Activated naive CD4-positive, alpha-beta T cell treated with anti-CD3 and anti-CD28 coated beads for 36 hours (primary cell): ENCODE measurements at regions of chr19 and their contacts with region 1.

Region 1: DNA sequence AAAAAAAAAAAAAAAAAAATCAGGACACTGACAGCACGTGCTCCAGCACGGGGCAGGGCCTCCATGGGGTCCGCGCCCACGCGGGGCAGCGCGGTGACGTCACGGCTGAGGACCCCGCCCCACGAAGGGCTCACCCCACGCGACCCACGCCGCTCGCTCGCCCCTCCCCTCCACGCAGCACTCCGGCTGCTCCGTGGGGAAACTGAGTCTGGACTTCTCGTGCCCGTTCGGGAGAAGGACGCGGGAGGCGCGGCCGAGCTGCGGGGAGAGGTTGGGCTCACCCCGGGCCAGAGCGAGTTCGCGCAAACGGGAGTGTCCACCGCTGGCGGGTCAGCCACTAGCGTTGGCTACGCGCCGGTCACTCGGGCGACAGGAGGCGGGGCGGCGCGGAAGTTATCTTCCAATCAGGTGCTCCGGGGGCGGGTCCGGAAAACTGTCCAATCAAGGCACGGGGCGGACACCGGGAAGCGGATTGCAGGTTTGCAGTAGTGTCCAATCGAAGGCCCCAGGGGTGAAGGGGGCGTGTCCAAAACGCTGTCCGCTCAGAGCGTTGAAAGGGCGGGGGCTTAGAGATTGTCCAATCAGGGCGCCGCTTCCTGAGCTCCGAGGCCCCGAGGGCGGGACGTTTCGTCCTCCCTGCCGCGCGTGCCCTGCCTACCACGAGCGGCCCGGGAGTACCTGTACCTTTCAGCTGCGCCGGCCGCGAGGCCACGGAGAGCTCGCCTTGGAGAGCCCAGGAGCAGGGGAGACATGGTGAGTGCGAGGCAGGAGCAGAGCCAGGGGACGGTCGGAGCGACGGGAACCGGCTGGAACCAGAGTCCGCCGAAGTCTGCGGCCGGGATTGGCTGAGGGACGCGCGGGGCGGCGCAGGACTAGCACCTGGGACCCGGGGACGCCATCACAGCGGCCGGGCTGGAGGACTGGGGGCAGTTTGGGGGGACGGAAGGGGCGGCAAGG is at the start of gene ZNF57:
- DNase-seq: peak; percentile 99
- H3K4me3 Mint-ChIP-seq: peak within 1 kb of the TSS; percentile 100
- H3K27ac Mint-ChIP-seq: peak within 1 kb of the TSS; percentile 82
- H3K4me1 Mint-ChIP-seq: peaks cover 15% of the 10 kb centered on the region
- H3K27me3 Mint-ChIP-seq: no peaks in the 10 kb centered on the region
- total RNA-seq, gene ZNF57: 3.9 to 4.7 TPM

Region 2: DNA sequence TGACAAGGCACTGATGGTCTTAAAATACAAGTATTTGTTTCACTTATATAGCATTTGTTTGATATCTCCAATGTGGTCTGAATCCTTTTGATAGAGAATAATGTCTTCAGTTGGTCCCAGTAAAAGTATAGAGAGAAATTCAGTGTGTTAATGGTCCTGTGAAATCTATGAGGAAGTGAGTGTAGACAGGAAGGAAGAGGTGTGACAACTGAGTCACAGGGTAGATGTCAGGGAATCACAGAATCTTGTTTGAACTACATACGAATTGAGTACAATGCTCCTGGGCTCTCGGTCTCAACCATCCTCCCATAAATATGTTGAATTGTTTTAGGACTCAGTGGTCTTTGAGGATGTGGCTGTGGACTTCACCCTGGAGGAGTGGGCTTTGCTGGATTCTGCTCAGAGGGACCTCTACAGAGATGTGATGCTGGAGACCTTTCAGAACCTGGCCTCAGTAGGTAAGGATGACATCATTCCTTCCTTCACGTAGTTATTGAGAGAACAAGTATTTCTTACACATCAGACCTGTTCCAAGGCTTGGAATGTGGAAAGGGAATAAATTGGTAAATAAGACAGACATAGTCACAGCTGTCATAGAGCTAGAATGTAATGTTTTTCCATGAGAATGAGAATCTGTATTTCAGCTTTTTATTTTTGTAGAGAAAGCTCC is 50.2 kb before region 1 on chr19:
- CTCF ChIA-PET with region 1: no interaction called
- intact Hi-C with region 1: loop called (anchors 5 kb)
- DNase-seq: no peak
- H3K4me3 Mint-ChIP-seq: no peak overlapping the region
- H3K27ac Mint-ChIP-seq: peak overlapping the region; percentile 43
- H3K4me1 Mint-ChIP-seq: peaks cover 13% of the 10 kb centered on the region
- H3K27me3 Mint-ChIP-seq: no peaks in the 10 kb centered on the region

Region 3: GRCh38 chr19:2944775-2945574 is 44.4 kb after region 1 on chr19 and contains the start of gene ZNF77:
- CTCF ChIA-PET with region 1: no interaction called
- intact Hi-C with region 1: loop called (anchors 1 kb)
- DNase-seq: peak; percentile 100
- H3K4me3 Mint-ChIP-seq: peak within 1 kb of the TSS; percentile 98
- H3K27ac Mint-ChIP-seq: peak within 1 kb of the TSS; percentile 95
- H3K4me1 Mint-ChIP-seq: peaks cover 34% of the 10 kb centered on the region
- H3K27me3 Mint-ChIP-seq: no peaks in the 10 kb centered on the region
- total RNA-seq, gene ZNF77: 3.7 to 3.9 TPM

Region 4: GRCh38 chr19:3082331-3082730 is 181.8 kb after region 1 on chr19:
- CTCF ChIA-PET with region 1: no interaction called
- intact Hi-C with region 1: no loop called
- DNase-seq: no peak
- H3K4me3 Mint-ChIP-seq: no peak overlapping the region
- H3K27ac Mint-ChIP-seq: no peak overlapping the region
- H3K4me1 Mint-ChIP-seq: no peaks in the 10 kb centered on the region
- H3K27me3 Mint-ChIP-seq: no peaks in the 10 kb centered on the region

Region 5: DNA sequence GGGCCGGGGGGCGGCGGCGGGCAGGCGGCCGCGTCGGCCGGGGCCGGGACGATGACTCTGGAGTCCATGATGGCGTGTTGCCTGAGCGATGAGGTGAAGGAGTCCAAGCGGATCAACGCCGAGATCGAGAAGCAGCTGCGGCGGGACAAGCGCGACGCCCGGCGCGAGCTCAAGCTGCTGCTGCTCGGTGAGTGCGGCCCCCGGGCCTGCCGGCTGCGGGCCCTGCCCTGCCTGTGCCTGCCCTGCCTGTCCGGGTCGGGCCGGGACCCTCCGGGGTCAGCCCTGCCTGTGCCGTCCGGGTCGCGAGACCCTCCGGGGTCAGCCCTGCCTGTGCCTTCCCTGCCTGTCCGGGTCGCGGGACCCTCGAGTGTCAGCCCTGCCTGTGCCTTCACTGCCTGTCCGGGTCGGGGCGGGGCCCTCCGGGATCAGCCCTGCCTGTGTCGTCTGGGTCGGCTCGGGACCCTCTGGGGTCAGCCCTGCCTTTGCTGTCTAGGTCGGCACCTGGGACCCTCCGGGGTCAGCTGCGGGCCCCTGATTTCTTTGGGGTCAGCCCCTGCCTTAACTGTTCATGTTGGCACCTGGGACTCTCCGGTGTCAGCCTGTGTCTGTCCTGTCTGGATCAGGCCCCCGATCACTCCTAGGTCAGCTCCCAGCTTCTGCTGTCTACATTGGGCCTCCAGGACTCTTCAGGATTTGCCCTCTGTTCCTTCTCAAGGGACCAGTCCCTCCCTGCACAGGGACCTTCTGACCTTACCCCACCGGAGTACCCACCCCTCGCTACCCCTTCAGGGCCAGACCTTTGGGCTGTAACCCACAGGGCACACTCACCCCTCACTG is 194.2 kb after region 1 on chr19:
- CTCF ChIA-PET with region 1: no interaction called
- intact Hi-C with region 1: loop called (anchors 5 kb)
- DNase-seq: peak; percentile 59
- H3K4me3 Mint-ChIP-seq: peak overlapping the region; percentile 77
- H3K27ac Mint-ChIP-seq: no peak overlapping the region
- H3K4me1 Mint-ChIP-seq: peaks cover 34% of the 10 kb centered on the region
- H3K27me3 Mint-ChIP-seq: no peaks in the 10 kb centered on the region